ENCODE measurements at regions of chr17 and their contacts with region 1.

Region 1: DNA sequence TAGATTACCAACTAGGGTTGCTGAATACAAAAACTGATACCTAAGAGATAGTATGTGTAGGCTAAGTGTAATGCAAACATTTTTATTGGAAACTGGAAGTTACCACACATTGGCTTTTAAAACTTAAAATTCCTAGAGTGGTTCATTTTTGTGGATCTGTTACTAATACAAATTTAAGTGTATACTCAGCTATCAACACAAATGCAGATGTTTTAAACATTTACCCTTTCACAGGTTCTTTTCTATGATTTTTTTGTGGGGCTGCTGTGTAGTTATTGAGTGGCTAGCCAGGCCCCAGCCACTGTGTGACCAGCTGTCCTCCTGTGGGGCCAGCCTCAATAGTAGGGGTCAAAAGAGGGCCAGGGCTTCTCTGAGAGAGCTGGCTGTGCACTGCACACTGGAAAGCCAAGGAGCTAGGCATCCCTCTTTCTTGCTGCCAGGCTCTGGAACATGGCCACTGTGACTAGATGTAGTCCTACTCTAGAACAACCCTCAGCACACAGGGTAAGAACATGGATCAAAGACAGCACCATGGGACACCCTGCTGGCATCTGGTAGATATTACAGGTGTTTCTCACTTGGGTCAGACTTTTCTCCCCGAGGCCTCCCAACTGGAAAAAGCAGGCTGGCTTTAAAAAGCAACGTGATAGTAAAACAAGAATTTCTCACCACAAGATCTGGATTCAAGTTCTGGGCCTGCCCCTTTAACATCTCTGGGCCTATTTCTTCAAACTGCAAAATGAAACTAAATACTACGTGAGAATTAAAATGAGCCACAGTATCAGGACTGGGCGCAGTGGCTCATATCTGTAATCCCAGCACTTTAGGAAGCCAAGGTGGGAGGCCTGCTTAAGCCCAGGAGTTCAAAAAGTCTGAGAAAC is 7.3 kb upstream of the VEZF1 start:
- DNase-seq: peak; percentile 80
- H3K4me3 Mint-ChIP-seq: peak overlapping the region; percentile 14
- H3K27ac Mint-ChIP-seq: peak overlapping the region; percentile 68
- H3K4me1 Mint-ChIP-seq: peaks cover 70% of the 10 kb centered on the region
- H3K27me3 Mint-ChIP-seq: no peaks in the 10 kb centered on the region

Region 2: GRCh38 chr17:57855391-57856035 is 139.8 kb before region 1 on chr17:
- CTCF ChIA-PET with region 1: interaction called, 43 read pairs
- intact Hi-C with region 1: loop called (anchors 1 kb)
- DNase-seq: no peak
- H3K4me3 Mint-ChIP-seq: no peak overlapping the region
- H3K27ac Mint-ChIP-seq: no peak overlapping the region
- H3K4me1 Mint-ChIP-seq: peaks cover 11% of the 10 kb centered on the region
- H3K27me3 Mint-ChIP-seq: no peaks in the 10 kb centered on the region

Region 3: GRCh38 chr17:57916925-57917858 is 78.1 kb before region 1 on chr17:
- CTCF ChIA-PET with region 1: interaction called, 3 read pairs
- intact Hi-C with region 1: loop called (anchors 1 kb)
- DNase-seq: peak; percentile 45
- H3K4me3 Mint-ChIP-seq: no peak overlapping the region
- H3K27ac Mint-ChIP-seq: no peak overlapping the region
- H3K4me1 Mint-ChIP-seq: no peaks in the 10 kb centered on the region
- H3K27me3 Mint-ChIP-seq: no peaks in the 10 kb centered on the region

Region 4: DNA sequence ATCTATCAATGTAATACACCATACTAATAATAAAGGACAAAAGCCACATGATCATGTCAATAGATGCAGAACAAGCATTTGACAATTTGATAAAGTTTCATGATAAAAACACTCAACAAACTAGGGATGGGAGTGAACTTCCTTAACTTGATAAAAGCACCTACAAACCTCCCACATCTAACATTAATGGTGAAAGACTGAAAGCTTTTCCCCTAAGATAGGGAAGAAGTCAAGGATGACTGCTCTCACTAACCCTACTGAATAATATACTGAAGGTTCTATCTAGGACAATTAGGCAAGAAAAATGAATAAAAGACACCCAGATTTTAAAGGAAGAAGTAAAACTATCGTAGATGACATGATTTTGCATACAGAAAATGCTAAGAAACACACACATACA is 77.5 kb after region 1 on chr17:
- CTCF ChIA-PET with region 1: no interaction called
- intact Hi-C with region 1: no loop called
- DNase-seq: no peak
- H3K4me3 Mint-ChIP-seq: no peak overlapping the region
- H3K27ac Mint-ChIP-seq: no peak overlapping the region
- H3K4me1 Mint-ChIP-seq: no peaks in the 10 kb centered on the region
- H3K27me3 Mint-ChIP-seq: peaks cover 13% of the 10 kb centered on the region

Region 5: GRCh38 chr17:58112970-58113631 is 117.8 kb after region 1 on chr17:
- CTCF ChIA-PET with region 1: interaction called, 4 read pairs
- intact Hi-C with region 1: loop called (anchors 1 kb)
- DNase-seq: peak; percentile 94
- H3K4me3 Mint-ChIP-seq: no peak overlapping the region
- H3K27ac Mint-ChIP-seq: no peak overlapping the region
- H3K4me1 Mint-ChIP-seq: no peaks in the 10 kb centered on the region
- H3K27me3 Mint-ChIP-seq: no peaks in the 10 kb centered on the region

Measured in activated naive CD4-positive, alpha-beta T cell treated with anti-CD3 and anti-CD28 coated beads for 36 hours (primary cell).